CD14-positive monocyte (primary cell): ENCODE measurements at regions of chr1 and their contacts with region 1.

Region 1: DNA sequence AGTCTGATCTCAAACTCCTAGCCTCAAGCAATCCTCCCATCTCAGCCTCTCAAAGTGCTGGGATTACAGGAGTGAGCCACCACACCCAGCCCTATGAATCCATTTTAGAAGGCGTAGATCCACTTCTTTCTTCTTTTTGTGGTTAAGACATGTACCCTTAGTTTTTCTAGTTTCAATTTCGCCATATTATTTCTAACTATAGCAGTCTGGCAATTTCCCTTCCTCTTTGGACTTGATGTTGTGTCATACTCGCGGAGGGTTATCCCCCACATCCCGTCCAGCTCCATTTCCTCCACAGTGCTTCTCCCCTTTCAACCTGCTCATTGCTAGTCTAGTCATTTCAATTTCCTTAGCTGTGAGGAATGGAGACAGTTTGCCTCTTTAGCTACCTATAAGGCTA is 5.2 kb upstream of the LRRC8D start:
- DNase-seq: peak; percentile 85 to 95 (median 94)
- H3K4me3 ChIP-seq: peak overlapping the region in 1 of 3 experiments; percentile 52
- H3K4me3 Mint-ChIP-seq: peak overlapping the region; percentile 3 to 69
- H3K27ac ChIP-seq: peak overlapping the region; percentile 62 to 75
- H3K27ac Mint-ChIP-seq: peak overlapping the region; percentile 83 to 97 (median 94)
- H3K4me1 ChIP-seq: peaks cover 91 to 97% of the 10 kb centered on the region in 2 donors
- H3K4me1 Mint-ChIP-seq: peaks cover 90% of the 10 kb centered on the region
- H3K27me3 ChIP-seq: no peaks in the 10 kb centered on the region
- H3K27me3 Mint-ChIP-seq: no peaks in the 10 kb centered on the region
- CTCF ChIP-seq: no peak

Region 2: DNA sequence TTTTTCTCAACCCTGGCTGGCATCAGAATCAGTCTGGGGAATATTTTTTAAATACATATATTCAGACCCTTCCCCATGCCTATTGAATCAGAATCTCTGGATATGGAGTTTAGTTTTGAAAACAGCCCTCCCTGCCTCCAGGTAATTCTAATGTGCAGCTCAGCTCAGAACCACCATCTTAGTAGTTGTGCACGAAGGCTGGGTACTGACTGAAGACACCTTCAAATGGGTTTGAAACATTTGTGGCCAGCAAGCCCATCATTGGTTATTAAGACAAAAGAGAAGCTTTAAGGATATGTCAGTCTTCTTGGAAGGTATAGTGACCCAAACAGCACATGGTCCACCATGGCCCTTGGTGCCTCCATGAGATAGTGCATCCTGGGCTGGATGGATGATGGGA is 12.3 kb after region 1 on chr1:
- intact Hi-C with region 1: loop called in 1 of 2 experiments (anchors 2 kb)
- DNase-seq: no peak
- H3K4me3 ChIP-seq: no peak overlapping the region
- H3K4me3 Mint-ChIP-seq: no peak overlapping the region
- H3K27ac ChIP-seq: peak overlapping the region in 1 of 2 donors; percentile 62
- H3K27ac Mint-ChIP-seq: peak overlapping the region in 4 of 7 donors; percentile 19 to 82 (median 64)
- H3K4me1 ChIP-seq: peaks cover 74% of the 10 kb centered on the region in 2 donors
- H3K4me1 Mint-ChIP-seq: peaks cover 87% of the 10 kb centered on the region
- H3K27me3 ChIP-seq: no peaks in the 10 kb centered on the region
- H3K27me3 Mint-ChIP-seq: no peaks in the 10 kb centered on the region
- CTCF ChIP-seq: no peak